AG04450 (cell line): ENCODE measurements at regions of chr1 and their contacts with region 1.

Region 1: GRCh38 chr1:220680085-220680687 is 10.0 kb upstream of the C1orf115 start:
- DNase-seq: no peak
- H3K4me3 ChIP-seq: no peak overlapping the region
- H3K27ac ChIP-seq: no peak overlapping the region
- H3K27me3 ChIP-seq: no peaks in the 10 kb centered on the region
- CTCF ChIP-seq: peak; percentile 80

Region 2: GRCh38 chr1:220666349-220666748 is 13.8 kb before region 1 on chr1:
- CTCF ChIA-PET with region 1: no interaction called
- POLR2A ChIA-PET with region 1: no interaction called
- DNase-seq: no peak
- H3K4me3 ChIP-seq: no peak overlapping the region
- H3K27ac ChIP-seq: no peak overlapping the region
- H3K27me3 ChIP-seq: no peaks in the 10 kb centered on the region
- CTCF ChIP-seq: no peak

Region 3: GRCh38 chr1:220701974-220702373 is 21.8 kb after region 1 on chr1:
- CTCF ChIA-PET with region 1: interaction called, 10 read pairs
- POLR2A ChIA-PET with region 1: no interaction called
- DNase-seq: no peak
- H3K4me3 ChIP-seq: no peak overlapping the region
- H3K27ac ChIP-seq: no peak overlapping the region
- H3K27me3 ChIP-seq: peaks cover 11% of the 10 kb centered on the region
- CTCF ChIP-seq: no peak